ENCODE measurements at regions of chr6 and their contacts with region 1.

Region 1: DNA sequence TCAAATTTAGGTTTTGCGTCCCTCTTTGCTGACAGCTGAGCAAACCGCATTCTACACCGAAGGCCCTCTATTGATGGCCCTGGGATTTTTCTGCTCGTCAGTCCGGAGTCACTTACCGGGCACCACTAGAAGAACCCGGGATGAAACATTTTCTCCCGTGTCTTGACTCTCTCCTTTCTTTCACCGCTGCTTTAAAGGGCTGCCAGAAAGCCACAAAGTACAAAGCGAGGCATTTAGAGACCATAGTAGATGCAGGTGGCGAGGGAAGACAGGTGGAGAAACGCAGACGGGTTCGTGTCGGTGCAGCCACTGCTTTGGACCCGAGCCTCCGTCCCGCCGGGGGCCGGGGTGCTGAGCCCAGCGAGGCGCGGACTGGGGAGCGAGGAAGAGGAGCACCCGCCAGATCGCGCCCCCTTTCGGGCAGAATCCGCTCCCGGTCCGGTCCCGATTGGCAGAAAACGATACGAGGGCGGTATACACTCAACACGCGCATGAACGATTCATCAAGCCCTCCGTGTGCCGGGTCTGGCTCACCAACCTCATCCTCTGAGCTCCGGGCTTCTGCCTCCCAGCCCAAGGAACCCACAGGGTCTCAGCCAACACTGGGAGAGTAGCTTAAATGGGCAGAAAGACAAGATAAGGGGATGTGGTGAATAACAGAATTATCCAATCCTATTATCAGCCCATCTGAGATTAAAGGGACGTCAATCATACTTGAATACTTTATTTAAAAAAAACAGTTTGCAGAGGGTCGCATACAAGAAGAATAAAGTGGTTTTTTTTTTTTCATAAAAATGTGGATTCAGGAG is 84.9 kb downstream of the TRIM27 start:
- DNase-seq: peak; percentile 86
- H3K4me3 ChIP-seq: peak overlapping the region; percentile 29 to 60 (median 51)
- H3K27ac ChIP-seq: peak overlapping the region; percentile 71 to 79 (median 74)
- H3K4me1 ChIP-seq: peaks cover 0 to 21% (median 11%) of the 10 kb centered on the region in 4 donors
- H3K27me3 ChIP-seq: peaks cover 59% of the 10 kb centered on the region
- CTCF ChIP-seq: peak; percentile 44 to 55 (median 54)
- EP300 ChIP-seq: no peak
- POLR2A ChIP-seq: no peak

Region 2: DNA sequence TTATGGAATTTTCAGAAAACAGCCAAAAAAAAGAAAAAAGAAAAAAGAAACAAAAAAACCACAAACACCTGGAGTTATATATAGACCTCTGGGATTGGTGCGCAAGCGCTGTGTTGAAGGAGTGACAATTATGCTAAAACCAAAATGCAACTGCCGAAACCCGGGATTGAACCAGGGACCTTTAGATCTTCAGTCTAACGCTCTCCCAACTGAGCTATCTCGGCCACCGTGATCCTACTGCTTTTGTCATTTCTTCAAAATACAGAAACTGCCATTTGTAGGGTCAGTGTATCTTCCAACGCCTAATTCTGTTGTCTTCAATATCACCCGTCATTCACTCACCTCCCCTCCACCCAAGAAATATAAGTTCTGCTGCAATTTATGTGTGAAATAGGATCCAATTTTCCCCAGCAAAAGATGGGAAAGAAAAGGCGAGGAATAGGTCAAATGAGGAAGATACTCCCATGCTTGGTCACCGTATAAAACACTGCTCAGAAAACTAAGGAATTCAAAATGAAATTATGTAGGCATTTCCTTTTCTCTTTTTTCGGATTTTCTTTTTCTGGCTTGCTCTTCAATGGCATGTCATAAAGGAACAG is 31.1 kb before region 1 on chr6:
- in situ Hi-C with region 1: no loop called
- intact Hi-C with region 1: no loop called
- DNase-seq: no peak
- H3K4me3 ChIP-seq: no peak overlapping the region
- H3K27ac ChIP-seq: no peak overlapping the region
- H3K4me1 ChIP-seq: no peaks in the 10 kb centered on the region
- H3K27me3 ChIP-seq: peaks cover 99% of the 10 kb centered on the region
- CTCF ChIP-seq: no peak
- EP300 ChIP-seq: no peak
- POLR2A ChIP-seq: no peak

Region 3: DNA sequence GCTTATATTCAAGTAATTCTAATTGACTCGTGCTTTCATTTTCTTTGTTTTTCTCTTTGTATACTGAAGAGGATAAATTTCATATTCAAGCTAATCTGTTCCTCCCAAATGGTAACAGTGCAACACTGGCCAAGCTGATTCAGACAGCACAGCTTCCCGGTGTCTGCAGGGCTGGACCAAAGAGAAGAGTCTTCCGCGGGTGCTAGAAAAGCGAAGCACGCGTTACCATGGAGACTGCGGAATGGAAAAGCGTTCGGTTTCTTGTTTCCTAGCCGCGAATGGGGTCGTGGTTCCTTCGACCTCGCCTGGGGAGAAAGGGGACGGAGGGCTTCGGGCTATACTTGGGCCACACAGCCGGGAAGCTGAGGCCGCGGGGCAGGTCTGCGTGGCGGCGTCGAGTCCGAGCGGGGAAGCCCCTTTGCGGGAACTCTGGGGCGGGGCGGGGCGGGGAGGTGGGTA is 172.5 kb after region 1 on chr6:
- in situ Hi-C with region 1: loop called (anchors 5 to 25 kb)
- intact Hi-C with region 1: loop called (anchors 2 kb)
- DNase-seq: peak; percentile 19
- H3K4me3 ChIP-seq: peak overlapping the region in 3 of 4 donors; percentile 20 to 52 (median 32)
- H3K27ac ChIP-seq: no peak overlapping the region
- H3K4me1 ChIP-seq: peaks cover 0 to 12% (median 9%) of the 10 kb centered on the region in 4 donors
- H3K27me3 ChIP-seq: peaks cover 55% of the 10 kb centered on the region
- CTCF ChIP-seq: no peak
- EP300 ChIP-seq: no peak
- POLR2A ChIP-seq: no peak